ENCODE measurements at regions of chr2 and their contacts with region 1.

Region 1: DNA sequence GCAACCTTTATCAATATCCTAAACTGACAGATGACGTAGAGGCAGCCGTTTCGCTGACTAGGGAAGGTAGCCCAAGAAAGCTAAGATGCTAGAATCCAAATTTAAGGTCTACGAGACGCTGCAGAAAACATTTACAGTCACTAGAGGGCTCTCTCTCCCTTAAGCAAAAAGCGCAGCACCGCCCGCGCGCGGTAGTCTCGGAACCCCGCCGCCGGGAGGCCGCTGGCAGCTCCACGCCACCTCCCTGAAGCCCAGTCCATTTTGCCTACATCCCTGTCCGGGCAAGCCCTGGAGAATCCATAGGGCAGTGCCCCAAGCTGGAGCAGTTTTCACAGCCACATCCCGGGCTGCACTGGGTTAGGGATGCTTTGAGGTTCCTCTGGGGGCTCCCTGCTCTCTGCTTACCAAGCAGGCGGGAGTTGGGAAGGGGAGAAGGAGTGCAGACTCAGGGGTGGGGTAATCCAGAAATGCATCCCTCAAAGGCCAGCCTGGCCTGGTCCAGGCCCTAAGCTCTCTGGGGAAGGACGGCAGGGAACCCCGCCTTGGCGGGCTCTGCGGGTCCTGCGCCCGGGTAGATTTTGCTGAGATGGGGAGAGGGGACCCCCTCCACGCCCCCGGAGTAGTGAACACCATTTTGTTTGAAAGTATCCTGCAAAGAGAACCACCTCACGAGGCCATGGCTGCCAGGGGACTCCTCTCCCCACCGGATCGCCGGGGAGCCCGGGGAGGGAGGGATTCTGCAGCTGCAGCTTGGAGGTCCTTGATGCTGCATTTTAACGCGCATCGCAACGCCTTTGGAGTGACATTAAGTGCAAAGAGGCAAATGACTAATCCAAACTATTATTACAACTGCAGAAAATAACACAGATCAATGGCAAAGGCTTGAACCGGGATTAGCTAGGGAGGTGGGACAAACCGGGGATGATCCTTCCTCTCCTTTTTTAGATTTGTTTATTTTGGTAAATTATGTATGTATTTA is 1.3 kb upstream of the DPYSL5 start:
- DNase-seq: no peak
- ATAC-seq: peak; percentile 95
- H3K4me3 ChIP-seq: no peak overlapping the region
- H3K27ac ChIP-seq: no peak overlapping the region
- H3K4me1 ChIP-seq: no peaks in the 10 kb centered on the region
- H3K27me3 ChIP-seq: peaks cover 18 to 27% of the 10 kb centered on the region in 2 experiments
- CTCF ChIP-seq: peak; percentile 77 to 90 (median 77)
- EP300 ChIP-seq: no peak
- POLR2A ChIP-seq: no peak
- RAD21 ChIP-seq: peak; percentile 71

Region 2: GRCh38 chr2:26043862-26044696 is 802.5 kb before region 1 on chr2:
- CTCF ChIA-PET with region 1: no interaction called
- POLR2A ChIA-PET with region 1: no interaction called
- RAD21 ChIA-PET with region 1: no interaction called
- SMC1A ChIA-PET with region 1: no interaction called
- in situ Hi-C with region 1: no loop called
- intact Hi-C with region 1: no loop called
- DNase-seq: no peak
- ATAC-seq: peak; percentile 86
- H3K4me3 ChIP-seq: peak overlapping the region; percentile 55; the same call in 1 of the 2 replicates
- H3K27ac ChIP-seq: peak overlapping the region; percentile 76
- H3K4me1 ChIP-seq: peaks cover 6% of the 10 kb centered on the region; the same call in 1 of the 2 replicates
- H3K27me3 ChIP-seq: no peaks in the 10 kb centered on the region
- CTCF ChIP-seq: no peak
- EP300 ChIP-seq: no peak
- POLR2A ChIP-seq: no peak
- RAD21 ChIP-seq: no peak

Region 3: DNA sequence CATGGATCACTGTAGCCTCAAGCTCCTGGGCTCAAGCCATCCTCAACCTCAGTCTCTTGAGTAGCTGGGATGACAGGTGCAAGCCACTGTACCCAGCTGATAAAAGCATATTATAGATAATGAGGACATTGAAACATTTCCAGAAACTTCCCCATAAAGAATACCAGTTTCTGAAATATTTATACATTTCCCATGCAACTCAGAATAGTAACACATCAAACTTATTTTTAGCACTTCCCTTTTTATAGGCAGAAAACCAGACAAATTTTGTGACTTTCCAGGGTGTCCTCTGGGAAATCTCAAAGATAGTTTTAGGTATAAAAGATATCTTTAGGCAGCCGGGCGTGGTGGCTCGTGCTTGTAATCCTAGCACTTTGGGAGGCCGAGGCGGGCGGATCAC is 23.7 kb before region 1 on chr2:
- CTCF ChIA-PET with region 1: interaction called, 10 read pairs
- POLR2A ChIA-PET with region 1: no interaction called
- RAD21 ChIA-PET with region 1: no interaction called
- SMC1A ChIA-PET with region 1: no interaction called
- in situ Hi-C with region 1: no loop called
- intact Hi-C with region 1: no loop called
- DNase-seq: no peak
- ATAC-seq: no peak
- H3K4me3 ChIP-seq: no peak overlapping the region
- H3K27ac ChIP-seq: no peak overlapping the region
- H3K4me1 ChIP-seq: no peaks in the 10 kb centered on the region
- H3K27me3 ChIP-seq: no peaks in the 10 kb centered on the region
- CTCF ChIP-seq: no peak
- EP300 ChIP-seq: no peak
- POLR2A ChIP-seq: no peak
- RAD21 ChIP-seq: no peak

Region 4: DNA sequence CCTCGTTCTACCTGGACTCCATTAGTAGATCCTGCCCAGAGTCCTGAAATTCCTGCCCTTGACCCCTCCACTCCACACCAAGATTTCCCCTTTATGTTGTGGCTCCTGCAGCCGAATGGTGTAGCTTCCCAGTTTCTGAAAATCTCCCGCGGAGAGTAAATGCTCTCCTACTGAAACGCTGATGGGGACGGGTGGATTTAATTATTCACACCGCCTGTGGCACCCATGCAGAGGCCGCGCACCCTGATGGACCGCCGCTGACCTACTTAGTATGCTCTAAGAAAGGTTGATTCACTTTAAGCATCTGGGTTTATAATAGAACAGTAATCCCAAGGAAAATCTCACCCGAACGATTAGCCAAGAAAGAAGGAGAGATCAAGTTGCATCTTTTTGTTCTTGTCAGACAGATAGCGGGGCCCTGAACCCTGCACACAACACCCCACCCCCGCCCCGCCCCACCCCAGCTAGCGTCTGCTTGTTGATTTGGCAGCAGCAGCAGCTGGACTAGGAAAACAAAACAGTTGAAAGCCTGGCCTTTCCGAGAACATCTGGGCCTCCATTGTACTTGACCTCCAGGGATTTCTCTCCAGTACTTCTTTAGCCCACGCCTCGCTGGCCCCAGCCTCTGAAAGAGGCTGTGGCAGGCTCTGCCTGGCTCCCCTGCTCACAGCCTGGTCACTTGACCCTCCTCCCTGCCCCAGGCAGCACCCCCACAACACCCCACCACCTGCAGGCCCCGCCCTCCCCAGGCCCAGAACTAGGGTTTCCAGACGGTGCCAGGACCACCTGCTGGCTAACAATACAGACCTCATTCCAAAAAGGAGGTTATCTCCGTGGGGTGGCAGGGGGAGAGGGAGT is 54.9 kb after region 1 on chr2:
- CTCF ChIA-PET with region 1: interaction called, 12 read pairs
- POLR2A ChIA-PET with region 1: no interaction called
- RAD21 ChIA-PET with region 1: no interaction called
- SMC1A ChIA-PET with region 1: no interaction called
- in situ Hi-C with region 1: no loop called
- intact Hi-C with region 1: no loop called
- DNase-seq: no peak
- ATAC-seq: no peak
- H3K4me3 ChIP-seq: no peak overlapping the region
- H3K27ac ChIP-seq: no peak overlapping the region
- H3K4me1 ChIP-seq: peaks cover 5% of the 10 kb centered on the region
- H3K27me3 ChIP-seq: no peaks in the 10 kb centered on the region; a peak in 2 of 4 replicates
- CTCF ChIP-seq: no peak
- EP300 ChIP-seq: no peak
- POLR2A ChIP-seq: no peak
- RAD21 ChIP-seq: no peak

Region 5: GRCh38 chr2:26922405-26923188 is 76.0 kb after region 1 on chr2:
- CTCF ChIA-PET with region 1: interaction called, 62 read pairs
- POLR2A ChIA-PET with region 1: no interaction called
- RAD21 ChIA-PET with region 1: interaction called, 28 read pairs
- SMC1A ChIA-PET with region 1: interaction called, 21 read pairs
- in situ Hi-C with region 1: loop called (anchors 5 kb)
- intact Hi-C with region 1: loop called (anchors 1 kb)
- DNase-seq: no peak
- ATAC-seq: peak; percentile 89
- H3K4me3 ChIP-seq: no peak overlapping the region
- H3K27ac ChIP-seq: no peak overlapping the region
- H3K4me1 ChIP-seq: no peaks in the 10 kb centered on the region
- H3K27me3 ChIP-seq: no peaks in the 10 kb centered on the region
- CTCF ChIP-seq: peak; percentile 62 to 76 (median 69)
- EP300 ChIP-seq: no peak
- POLR2A ChIP-seq: no peak
- RAD21 ChIP-seq: peak; percentile 43

Region 6: DNA sequence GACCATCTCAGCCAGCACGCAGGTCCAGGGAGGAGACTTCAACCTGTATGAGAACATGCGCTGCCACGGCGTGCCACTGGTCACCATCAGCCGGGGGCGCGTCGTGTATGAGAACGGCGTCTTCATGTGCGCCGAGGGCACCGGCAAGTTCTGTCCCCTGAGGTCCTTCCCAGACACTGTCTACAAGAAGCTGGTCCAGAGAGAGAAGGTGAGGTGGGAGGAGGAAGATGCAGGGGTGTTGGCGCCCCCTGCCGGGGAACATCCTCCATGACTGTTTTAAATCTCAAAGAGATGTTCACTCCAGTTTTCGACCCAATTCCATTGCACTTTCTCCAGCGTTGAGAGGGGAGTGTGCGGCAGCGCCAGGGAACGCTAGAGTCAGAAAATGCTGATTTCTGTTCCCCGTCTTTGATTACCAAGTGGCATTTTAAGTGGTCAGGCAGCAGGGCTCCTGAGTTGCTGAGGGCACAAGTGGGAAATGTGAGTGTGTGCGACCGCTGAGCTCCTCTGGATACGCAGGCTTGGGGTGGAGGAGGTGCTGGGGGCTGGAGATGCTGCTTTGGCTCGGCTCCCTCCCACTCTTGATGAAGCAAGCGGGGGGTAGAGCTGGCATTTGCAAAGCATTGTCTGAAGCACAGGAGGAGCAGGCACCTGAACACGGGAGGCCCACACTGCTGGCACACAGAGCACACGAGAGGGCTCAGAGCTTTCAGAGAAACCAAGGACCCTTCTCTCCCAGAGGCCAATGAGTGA is 96.1 kb after region 1 on chr2:
- CTCF ChIA-PET with region 1: interaction called, 62 read pairs
- POLR2A ChIA-PET with region 1: no interaction called
- RAD21 ChIA-PET with region 1: interaction called, 40 read pairs
- SMC1A ChIA-PET with region 1: interaction called, 15 read pairs
- in situ Hi-C with region 1: no loop called
- intact Hi-C with region 1: loop called (anchors 1 kb)
- DNase-seq: no peak
- ATAC-seq: peak; percentile 78
- H3K4me3 ChIP-seq: no peak overlapping the region
- H3K27ac ChIP-seq: no peak overlapping the region
- H3K4me1 ChIP-seq: no peaks in the 10 kb centered on the region
- H3K27me3 ChIP-seq: no peaks in the 10 kb centered on the region; a peak in 3 of 4 replicates
- CTCF ChIP-seq: peak; percentile 75 to 82 (median 75); a peak in 5 of 6 replicates
- EP300 ChIP-seq: no peak
- POLR2A ChIP-seq: no peak
- RAD21 ChIP-seq: peak; percentile 61

Region 7: DNA sequence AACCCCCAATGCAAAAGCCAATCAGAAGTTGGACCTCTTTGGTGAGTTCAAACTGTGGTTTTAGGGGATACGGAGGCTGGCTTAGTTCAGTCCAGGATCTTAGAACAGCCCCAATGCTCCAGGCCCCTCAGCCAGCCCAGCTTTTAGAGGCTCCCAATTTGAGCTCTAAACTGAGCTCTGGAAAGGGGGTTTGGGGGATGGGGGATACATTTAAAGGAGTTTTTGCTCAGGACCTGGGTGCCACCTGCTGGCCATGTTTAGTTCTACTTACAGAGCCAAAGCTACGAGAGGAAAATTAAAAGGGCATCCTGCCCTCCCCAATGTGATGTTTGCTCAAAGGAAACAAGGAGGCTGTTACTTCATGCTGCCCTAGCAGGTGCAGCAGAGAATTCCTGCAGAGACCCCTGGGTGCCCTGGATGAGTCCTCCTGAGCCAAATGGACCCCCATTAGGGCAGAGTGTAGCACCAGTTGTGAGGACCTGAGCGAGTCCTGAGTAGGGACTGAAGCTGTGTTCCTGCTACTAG is 170.2 kb after region 1 on chr2:
- CTCF ChIA-PET with region 1: interaction called, 16 read pairs
- POLR2A ChIA-PET with region 1: no interaction called
- RAD21 ChIA-PET with region 1: interaction called, 4 read pairs
- SMC1A ChIA-PET with region 1: interaction called, 12 read pairs
- in situ Hi-C with region 1: no loop called
- intact Hi-C with region 1: loop called (anchors 10 kb)
- DNase-seq: no peak
- ATAC-seq: peak; percentile 77
- H3K4me3 ChIP-seq: no peak overlapping the region
- H3K27ac ChIP-seq: no peak overlapping the region
- H3K4me1 ChIP-seq: no peaks in the 10 kb centered on the region
- H3K27me3 ChIP-seq: no peaks in the 10 kb centered on the region
- CTCF ChIP-seq: peak; percentile 58 to 66 (median 58)
- EP300 ChIP-seq: no peak
- POLR2A ChIP-seq: no peak
- RAD21 ChIP-seq: peak; percentile 74